ENCODE measurements at regions of chr2 and their contacts with region 1.

Region 1: DNA sequence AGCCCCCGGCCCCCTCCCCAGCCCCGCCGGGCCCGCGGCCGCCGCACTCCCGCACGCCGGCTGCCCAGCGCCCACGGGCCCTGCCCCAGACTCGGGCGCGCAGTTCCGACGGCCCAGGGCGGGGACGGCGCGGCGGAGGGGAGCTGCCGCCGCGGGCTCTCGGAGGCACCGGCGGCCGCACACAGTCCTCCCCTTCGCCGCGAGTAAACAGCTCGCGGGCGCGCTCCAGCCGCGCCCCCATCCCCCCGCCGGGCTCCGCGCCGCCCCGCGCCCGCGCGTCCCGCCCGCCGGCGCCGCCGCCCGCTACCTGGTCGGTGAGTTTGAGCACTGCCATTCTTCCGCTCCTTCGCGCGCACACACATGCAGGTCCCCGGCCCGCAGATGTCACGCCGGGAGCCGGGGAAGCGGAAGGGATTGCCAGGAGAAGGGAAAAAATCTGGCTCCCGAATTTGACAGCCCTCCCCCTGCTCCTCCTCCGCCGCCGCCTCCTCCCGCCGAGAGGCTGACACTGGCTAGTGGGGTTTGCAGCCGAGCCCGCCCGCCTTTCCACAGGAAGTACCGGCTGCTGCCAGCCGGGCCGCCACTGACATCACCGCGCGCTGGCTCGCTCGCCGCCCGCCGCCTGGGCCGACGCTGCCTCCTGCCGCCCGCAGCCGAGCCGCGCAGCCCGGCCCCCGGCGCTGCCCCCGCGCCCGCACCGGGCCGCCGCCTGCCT is at the start of gene ANKRD44:
- DNase-seq: peak; percentile 78 to 94 (median 87)
- ATAC-seq: peak; percentile 73 to 85 (median 77)
- H3K4me3 ChIP-seq: peak within 1 kb of the TSS; percentile 84 to 99
- H3K4me3 Mint-ChIP-seq: peak within 1 kb of the TSS; percentile 92 to 95 (median 92)
- H3K27ac ChIP-seq: peak within 1 kb of the TSS; percentile 83
- H3K27ac Mint-ChIP-seq: peak within 1 kb of the TSS; percentile 99
- H3K4me1 ChIP-seq: peaks cover 34 to 39% of the 10 kb centered on the region in 2 experiments
- H3K4me1 Mint-ChIP-seq: peaks cover 65 to 83% (median 74%) of the 10 kb centered on the region in 3 donors
- H3K27me3 ChIP-seq: no peaks in the 10 kb centered on the region
- H3K27me3 Mint-ChIP-seq: no peaks in the 10 kb centered on the region
- total RNA-seq, gene ANKRD44: 225 to 333 (median 238) TPM

Region 2: DNA sequence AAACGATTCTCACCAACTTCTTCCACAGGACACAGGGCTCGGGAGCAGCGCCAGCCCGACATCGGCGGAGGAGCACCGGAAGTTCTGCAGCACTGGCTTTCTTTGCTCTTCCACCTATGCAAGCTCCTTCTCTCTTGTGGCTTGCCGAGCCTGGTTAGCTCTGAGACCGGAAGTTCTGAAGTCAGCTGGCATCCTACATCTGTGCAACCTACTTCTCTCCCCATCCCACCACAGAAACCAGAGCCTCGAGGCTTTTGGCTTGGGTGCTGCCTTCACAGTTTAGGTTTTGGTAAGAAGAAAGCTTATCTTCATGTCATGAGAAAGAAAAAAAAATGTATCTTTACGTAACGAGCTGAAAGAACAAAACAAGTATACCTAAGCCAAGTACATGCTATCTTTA is 111.5 kb before region 1 on chr2:
- CTCF ChIA-PET with region 1: interaction called, 4 to 18 read pairs
- POLR2A ChIA-PET with region 1: interaction called, 7 to 18 read pairs
- DNase-seq: peak; percentile 68 to 98 (median 90)
- ATAC-seq: peak; percentile 88 to 93 (median 92)
- H3K4me3 ChIP-seq: peak overlapping the region; percentile 56 to 79
- H3K4me3 Mint-ChIP-seq: peak overlapping the region; percentile 84 to 91 (median 90)
- H3K27ac ChIP-seq: peak overlapping the region; percentile 95
- H3K27ac Mint-ChIP-seq: peak overlapping the region; percentile 96 to 99
- H3K4me1 ChIP-seq: peaks cover 52 to 69% of the 10 kb centered on the region in 2 experiments
- H3K4me1 Mint-ChIP-seq: peaks cover 90 to 94% (median 91%) of the 10 kb centered on the region in 3 donors
- H3K27me3 ChIP-seq: no peaks in the 10 kb centered on the region
- H3K27me3 Mint-ChIP-seq: no peaks in the 10 kb centered on the region

Region 3: GRCh38 chr2:197239434-197239833 is 71.0 kb before region 1 on chr2:
- CTCF ChIA-PET with region 1: interaction called, 3 to 10 read pairs
- POLR2A ChIA-PET with region 1: interaction called, 6 to 14 read pairs
- DNase-seq: peak in 1 of 35 experiments; percentile 53
- ATAC-seq: peak in 3 of 4 experiments; percentile 27 to 33 (median 30)
- H3K4me3 ChIP-seq: peak overlapping the region; percentile 23 to 53
- H3K4me3 Mint-ChIP-seq: peak overlapping the region; percentile 74 to 80 (median 78)
- H3K27ac ChIP-seq: peak overlapping the region; percentile 95
- H3K27ac Mint-ChIP-seq: peak overlapping the region; percentile 93 to 98
- H3K4me1 ChIP-seq: peaks cover 68 to 85% of the 10 kb centered on the region in 2 experiments
- H3K4me1 Mint-ChIP-seq: peaks cover 86 to 90% (median 88%) of the 10 kb centered on the region in 3 donors
- H3K27me3 ChIP-seq: no peaks in the 10 kb centered on the region
- H3K27me3 Mint-ChIP-seq: no peaks in the 10 kb centered on the region

Region 4: GRCh38 chr2:197261808-197262226 is 48.6 kb before region 1 on chr2:
- CTCF ChIA-PET with region 1: interaction called, 7 to 29 read pairs
- POLR2A ChIA-PET with region 1: interaction called, 7 to 12 read pairs
- DNase-seq: peak in 1 of 35 experiments; percentile 47
- ATAC-seq: peak; percentile 45 to 51 (median 48)
- H3K4me3 ChIP-seq: no peak overlapping the region
- H3K4me3 Mint-ChIP-seq: peak overlapping the region; percentile 26 to 61 (median 35)
- H3K27ac ChIP-seq: peak overlapping the region; percentile 88
- H3K27ac Mint-ChIP-seq: peak overlapping the region; percentile 87 to 91
- H3K4me1 ChIP-seq: peaks cover 61 to 72% of the 10 kb centered on the region in 2 experiments
- H3K4me1 Mint-ChIP-seq: peaks cover 82 to 85% (median 84%) of the 10 kb centered on the region in 3 donors
- H3K27me3 ChIP-seq: no peaks in the 10 kb centered on the region
- H3K27me3 Mint-ChIP-seq: no peaks in the 10 kb centered on the region